CD4-positive, alpha-beta T cell (primary cell): ENCODE measurements at regions of chr16 and their contacts with region 1.

Region 1: GRCh38 chr16:89507834-89508590 is at the start of gene SPG7:
- DNase-seq: peak; percentile 81 to 97 (median 90)
- ATAC-seq: peak; percentile 71
- H3K4me3 ChIP-seq: peak within 1 kb of the TSS; percentile 73
- H3K4me3 Mint-ChIP-seq: peak within 1 kb of the TSS; percentile 95
- H3K27ac ChIP-seq: peak within 1 kb of the TSS; percentile 79 to 81
- H3K27ac Mint-ChIP-seq: peak within 1 kb of the TSS; percentile 93
- H3K4me1 ChIP-seq: peaks cover 47% of the 10 kb centered on the region
- H3K4me1 Mint-ChIP-seq: peaks cover 42% of the 10 kb centered on the region
- H3K27me3 ChIP-seq: no peaks in the 10 kb centered on the region
- H3K27me3 Mint-ChIP-seq: no peaks in the 10 kb centered on the region
- CTCF ChIP-seq: no peak
- total RNA-seq, gene SPG7: 163 to 167 TPM

Region 2: GRCh38 chr16:89241187-89242007 is 266.6 kb before region 1 on chr16:
- CTCF ChIA-PET with region 1: interaction called, 4 read pairs
- POLR2A ChIA-PET with region 1: no interaction called
- intact Hi-C with region 1: loop called (anchors 2 to 5 kb)
- DNase-seq: peak; percentile 62 to 96 (median 78)
- ATAC-seq: peak; percentile 84
- H3K4me3 ChIP-seq: peak overlapping the region; percentile 67
- H3K4me3 Mint-ChIP-seq: peak overlapping the region; percentile 92
- H3K27ac ChIP-seq: peak overlapping the region; percentile 90 to 97
- H3K27ac Mint-ChIP-seq: peak overlapping the region; percentile 97
- H3K4me1 ChIP-seq: peaks cover 25% of the 10 kb centered on the region
- H3K4me1 Mint-ChIP-seq: peaks cover 16% of the 10 kb centered on the region
- H3K27me3 ChIP-seq: no peaks in the 10 kb centered on the region
- H3K27me3 Mint-ChIP-seq: no peaks in the 10 kb centered on the region
- CTCF ChIP-seq: no peak

Region 3: GRCh38 chr16:89330177-89330856 is 177.7 kb before region 1 on chr16:
- CTCF ChIA-PET with region 1: interaction called, 6 read pairs
- POLR2A ChIA-PET with region 1: interaction called, 5 read pairs
- intact Hi-C with region 1: loop called (anchors 1 to 2 kb)
- DNase-seq: peak in 6 of 14 experiments; percentile 32 to 84 (median 72)
- ATAC-seq: peak; percentile 67
- H3K4me3 ChIP-seq: peak overlapping the region; percentile 13
- H3K4me3 Mint-ChIP-seq: peak overlapping the region; percentile 10
- H3K27ac ChIP-seq: peak overlapping the region; percentile 60 to 67
- H3K27ac Mint-ChIP-seq: peak overlapping the region; percentile 80
- H3K4me1 ChIP-seq: peaks cover 82% of the 10 kb centered on the region
- H3K4me1 Mint-ChIP-seq: peaks cover 84% of the 10 kb centered on the region
- H3K27me3 ChIP-seq: no peaks in the 10 kb centered on the region
- H3K27me3 Mint-ChIP-seq: no peaks in the 10 kb centered on the region
- CTCF ChIP-seq: no peak

Region 4: DNA sequence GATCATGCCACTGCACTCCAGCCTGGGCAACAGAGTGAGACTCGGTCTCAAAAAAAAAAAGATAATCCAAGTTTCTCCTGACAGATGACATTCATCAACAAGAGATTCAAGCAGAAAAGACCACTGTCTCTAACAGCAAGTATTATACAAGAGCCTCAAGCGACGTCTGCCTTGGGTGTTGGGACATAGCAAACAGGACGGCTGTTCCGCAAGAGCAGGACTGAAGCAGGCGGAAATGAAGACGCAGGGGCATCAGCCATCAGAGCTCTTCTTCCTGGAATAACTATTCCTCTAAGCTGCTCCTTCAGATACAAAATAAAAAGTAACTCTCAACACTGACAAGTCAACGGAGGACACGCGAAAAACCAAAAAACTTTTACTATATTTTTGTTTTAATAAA is 71.6 kb before region 1 on chr16:
- CTCF ChIA-PET with region 1: no interaction called
- POLR2A ChIA-PET with region 1: interaction called, 12 read pairs
- intact Hi-C with region 1: no loop called
- DNase-seq: peak in 1 of 14 experiments; percentile 38
- ATAC-seq: no peak
- H3K4me3 ChIP-seq: no peak overlapping the region
- H3K4me3 Mint-ChIP-seq: peak overlapping the region; percentile 78
- H3K27ac ChIP-seq: no peak overlapping the region
- H3K27ac Mint-ChIP-seq: no peak overlapping the region
- H3K4me1 ChIP-seq: peaks cover 93% of the 10 kb centered on the region
- H3K4me1 Mint-ChIP-seq: no peaks in the 10 kb centered on the region
- H3K27me3 ChIP-seq: no peaks in the 10 kb centered on the region
- H3K27me3 Mint-ChIP-seq: no peaks in the 10 kb centered on the region
- CTCF ChIP-seq: no peak

Region 5: DNA sequence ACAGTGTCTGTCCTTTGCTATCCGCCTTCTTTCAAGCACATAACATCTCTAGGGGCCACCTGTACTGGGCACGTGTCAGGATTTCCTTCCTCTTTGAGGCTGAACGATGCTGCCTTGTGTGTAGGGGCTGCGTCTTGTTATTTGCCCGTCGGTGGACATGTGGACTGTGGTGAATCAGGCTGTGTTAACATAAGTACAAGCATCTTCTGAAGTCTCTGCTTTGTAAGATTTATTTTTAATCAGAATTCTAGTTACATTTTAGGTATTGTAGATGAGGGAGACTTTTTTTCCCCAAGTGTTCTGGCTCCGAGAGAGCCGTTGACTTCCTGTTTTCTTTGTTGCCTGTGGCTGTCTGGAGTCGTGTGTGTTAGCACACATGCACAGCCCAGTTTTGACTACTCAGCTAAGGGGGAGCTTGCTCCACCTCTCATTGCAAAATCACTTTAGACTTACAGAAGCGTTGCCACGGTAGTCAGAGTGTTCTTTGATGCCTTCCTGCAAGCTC is 26.3 kb after region 1 on chr16:
- CTCF ChIA-PET with region 1: no interaction called
- POLR2A ChIA-PET with region 1: interaction called, 15 read pairs
- intact Hi-C with region 1: loop called in 1 of 2 experiments (anchors 1 kb)
- DNase-seq: peak; percentile 25 to 81 (median 48)
- ATAC-seq: peak; percentile 96
- H3K4me3 ChIP-seq: no peak overlapping the region
- H3K4me3 Mint-ChIP-seq: peak overlapping the region; percentile 59
- H3K27ac ChIP-seq: peak overlapping the region; percentile 21 to 51
- H3K27ac Mint-ChIP-seq: peak overlapping the region; percentile 92
- H3K4me1 ChIP-seq: peaks cover 34% of the 10 kb centered on the region
- H3K4me1 Mint-ChIP-seq: peaks cover 23% of the 10 kb centered on the region
- H3K27me3 ChIP-seq: no peaks in the 10 kb centered on the region
- H3K27me3 Mint-ChIP-seq: no peaks in the 10 kb centered on the region
- CTCF ChIP-seq: no peak

Region 6: GRCh38 chr16:89602273-89602951 is 94.4 kb after region 1 on chr16:
- CTCF ChIA-PET with region 1: no interaction called
- POLR2A ChIA-PET with region 1: no interaction called
- intact Hi-C with region 1: no loop called
- DNase-seq: peak in 12 of 14 experiments; percentile 28 to 72 (median 52)
- ATAC-seq: peak; percentile 81
- H3K4me3 ChIP-seq: peak overlapping the region; percentile 3
- H3K4me3 Mint-ChIP-seq: peak overlapping the region; percentile 51
- H3K27ac ChIP-seq: no peak overlapping the region
- H3K27ac Mint-ChIP-seq: no peak overlapping the region
- H3K4me1 ChIP-seq: peaks cover 21% of the 10 kb centered on the region
- H3K4me1 Mint-ChIP-seq: peaks cover 12% of the 10 kb centered on the region
- H3K27me3 ChIP-seq: no peaks in the 10 kb centered on the region
- H3K27me3 Mint-ChIP-seq: no peaks in the 10 kb centered on the region
- CTCF ChIP-seq: no peak